IMR-90 (cell line): ENCODE measurements at regions of chr4 and their contacts with region 1.

Region 1: GRCh38 chr4:23635468-23635867 is 254.4 kb downstream of the PPARGC1A start:
- DNase-seq: no peak
- ATAC-seq: no peak
- H3K4me3 ChIP-seq: no peak overlapping the region
- H3K27ac ChIP-seq: no peak overlapping the region
- H3K4me1 ChIP-seq: no peaks in the 10 kb centered on the region
- H3K27me3 ChIP-seq: no peaks in the 10 kb centered on the region
- CTCF ChIP-seq: no peak
- POLR2A ChIP-seq: no peak
- RAD21 ChIP-seq: no peak

Region 2: GRCh38 chr4:23667659-23668058 is 32.2 kb after region 1 on chr4:
- CTCF ChIA-PET with region 1: no interaction called
- POLR2A ChIA-PET with region 1: no interaction called
- dilution Hi-C with region 1: no loop called
- in situ Hi-C with region 1: no loop called
- intact Hi-C with region 1: loop called (anchors 1 kb)
- DNase-seq: no peak
- ATAC-seq: no peak
- H3K4me3 ChIP-seq: no peak overlapping the region
- H3K27ac ChIP-seq: no peak overlapping the region
- H3K4me1 ChIP-seq: no peaks in the 10 kb centered on the region
- H3K27me3 ChIP-seq: no peaks in the 10 kb centered on the region
- CTCF ChIP-seq: no peak
- POLR2A ChIP-seq: no peak
- RAD21 ChIP-seq: no peak

Region 3: GRCh38 chr4:23706972-23707651 is 71.6 kb after region 1 on chr4:
- CTCF ChIA-PET with region 1: no interaction called
- POLR2A ChIA-PET with region 1: no interaction called
- dilution Hi-C with region 1: no loop called
- in situ Hi-C with region 1: no loop called
- intact Hi-C with region 1: no loop called
- DNase-seq: no peak
- ATAC-seq: no peak
- H3K4me3 ChIP-seq: no peak overlapping the region
- H3K27ac ChIP-seq: no peak overlapping the region
- H3K4me1 ChIP-seq: no peaks in the 10 kb centered on the region
- H3K27me3 ChIP-seq: peaks cover 2% of the 10 kb centered on the region
- CTCF ChIP-seq: no peak
- POLR2A ChIP-seq: no peak
- RAD21 ChIP-seq: no peak

Region 4: GRCh38 chr4:24781999-24782745 is 1146.7 kb after region 1 on chr4:
- CTCF ChIA-PET with region 1: no interaction called
- POLR2A ChIA-PET with region 1: no interaction called
- dilution Hi-C with region 1: no loop called
- in situ Hi-C with region 1: no loop called
- intact Hi-C with region 1: no loop called
- DNase-seq: no peak
- ATAC-seq: no peak
- H3K4me3 ChIP-seq: no peak overlapping the region
- H3K27ac ChIP-seq: no peak overlapping the region
- H3K4me1 ChIP-seq: peaks cover 18% of the 10 kb centered on the region
- H3K27me3 ChIP-seq: no peaks in the 10 kb centered on the region
- CTCF ChIP-seq: no peak
- POLR2A ChIP-seq: no peak
- RAD21 ChIP-seq: no peak